ENCODE measurements at regions of chr20 and their contacts with region 1.

Region 1: DNA sequence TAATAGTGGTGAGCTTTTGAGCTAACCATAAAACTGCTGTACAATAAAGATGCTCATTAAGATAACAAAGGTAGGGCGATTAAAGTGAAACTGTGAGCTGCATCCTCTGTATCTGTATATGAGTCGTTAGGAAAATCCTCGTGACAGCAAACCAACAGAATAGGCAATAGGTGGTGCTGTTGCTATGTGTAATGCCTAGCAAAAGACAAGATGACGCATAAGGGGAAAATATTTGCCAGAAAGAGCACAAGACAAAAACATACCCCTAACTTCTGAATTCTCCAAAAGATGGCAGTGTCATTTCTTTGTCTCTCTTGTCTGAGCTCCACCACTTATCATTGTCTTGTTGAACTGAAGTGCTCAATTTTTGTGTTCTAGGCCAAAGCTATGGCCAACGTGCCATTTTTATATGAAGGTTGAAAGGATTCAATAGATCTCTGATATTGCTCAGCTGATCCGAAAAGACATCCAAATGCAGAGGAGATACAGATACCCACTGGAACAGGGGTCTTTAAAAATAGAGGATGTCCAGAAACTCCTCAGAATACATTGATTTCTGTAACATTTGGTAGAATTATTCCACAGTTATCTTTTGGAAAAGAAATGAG is 56.3 kb upstream of the ANKEF1 start:
- DNase-seq: peak; percentile 63 to 94
- ATAC-seq: peak; percentile 94 to 95
- H3K4me3 ChIP-seq: no peak overlapping the region; the same call in 2 of the 3 replicates
- H3K27ac ChIP-seq: peak overlapping the region; percentile 33 to 74
- H3K4me1 ChIP-seq: peaks cover 21% of the 10 kb centered on the region; the same call in 2 of the 3 replicates
- CTCF ChIP-seq: peak; percentile 100
- EP300 ChIP-seq: peak in 1 of 2 experiments; percentile 31; a peak in 1 of 5 replicates
- POLR2A ChIP-seq: no peak
- RAD21 ChIP-seq: peak; percentile 100

Region 2: DNA sequence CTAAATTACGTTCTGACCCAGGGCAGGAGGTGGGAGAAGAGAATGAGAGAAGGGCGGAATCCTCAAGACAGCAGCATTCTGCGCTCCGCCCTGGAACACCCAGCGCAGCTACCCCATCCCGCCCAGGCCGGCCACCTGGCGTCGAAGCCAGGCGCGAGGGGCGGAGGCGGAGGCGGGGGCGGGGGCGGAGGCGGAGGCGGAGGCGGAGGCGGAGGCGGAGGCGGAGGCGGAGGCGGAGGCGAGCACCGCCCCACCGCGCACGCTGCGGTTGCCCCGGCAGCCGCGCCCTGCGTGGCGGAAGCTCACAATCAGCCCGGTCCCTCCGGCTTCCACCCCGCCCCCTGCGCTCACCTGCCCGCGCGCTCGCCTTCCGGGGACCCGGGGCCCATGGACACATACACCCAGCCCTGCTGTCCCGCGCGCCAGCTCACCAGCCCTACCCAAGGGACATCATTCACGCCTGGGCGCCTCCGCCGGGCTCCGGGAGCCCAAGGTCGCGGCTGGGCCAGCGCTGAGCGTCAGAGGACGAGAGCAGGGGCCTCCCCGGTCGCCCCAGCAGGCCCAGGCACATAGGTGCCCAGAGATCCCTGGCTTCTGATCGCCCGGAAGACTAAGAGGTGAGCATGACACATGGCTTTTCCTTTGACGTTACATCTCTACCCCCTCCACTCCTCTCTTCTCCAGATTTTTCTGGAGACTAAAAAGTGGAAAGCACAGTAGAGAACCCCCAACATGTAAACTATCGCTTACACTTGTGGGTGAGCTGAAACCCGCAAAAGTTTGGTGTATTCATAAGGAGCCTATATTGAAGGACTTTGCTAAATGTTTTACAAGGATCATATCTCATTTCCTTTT is 56.4 kb after region 1 on chr20 and contains the start of gene ANKEF1:
- CTCF ChIA-PET with region 1: interaction called, 24 read pairs
- POLR2A ChIA-PET with region 1: no interaction called
- DNase-seq: peak; percentile 88 to 91
- ATAC-seq: peak; percentile 99 to 100
- H3K4me3 ChIP-seq: peak within 1 kb of the TSS; percentile 61
- H3K27ac ChIP-seq: peak within 1 kb of the TSS; percentile 85 to 93
- H3K4me1 ChIP-seq: peaks cover 23% of the 10 kb centered on the region
- CTCF ChIP-seq: no peak
- EP300 ChIP-seq: no peak
- POLR2A ChIP-seq: peak; percentile 69
- RAD21 ChIP-seq: peak in 1 of 2 experiments; percentile 38; a peak in 2 of 5 replicates
- polyA plus RNA-seq, gene ANKEF1: 19.7 and 21.2 TPM in 2 replicates

Region 3: DNA sequence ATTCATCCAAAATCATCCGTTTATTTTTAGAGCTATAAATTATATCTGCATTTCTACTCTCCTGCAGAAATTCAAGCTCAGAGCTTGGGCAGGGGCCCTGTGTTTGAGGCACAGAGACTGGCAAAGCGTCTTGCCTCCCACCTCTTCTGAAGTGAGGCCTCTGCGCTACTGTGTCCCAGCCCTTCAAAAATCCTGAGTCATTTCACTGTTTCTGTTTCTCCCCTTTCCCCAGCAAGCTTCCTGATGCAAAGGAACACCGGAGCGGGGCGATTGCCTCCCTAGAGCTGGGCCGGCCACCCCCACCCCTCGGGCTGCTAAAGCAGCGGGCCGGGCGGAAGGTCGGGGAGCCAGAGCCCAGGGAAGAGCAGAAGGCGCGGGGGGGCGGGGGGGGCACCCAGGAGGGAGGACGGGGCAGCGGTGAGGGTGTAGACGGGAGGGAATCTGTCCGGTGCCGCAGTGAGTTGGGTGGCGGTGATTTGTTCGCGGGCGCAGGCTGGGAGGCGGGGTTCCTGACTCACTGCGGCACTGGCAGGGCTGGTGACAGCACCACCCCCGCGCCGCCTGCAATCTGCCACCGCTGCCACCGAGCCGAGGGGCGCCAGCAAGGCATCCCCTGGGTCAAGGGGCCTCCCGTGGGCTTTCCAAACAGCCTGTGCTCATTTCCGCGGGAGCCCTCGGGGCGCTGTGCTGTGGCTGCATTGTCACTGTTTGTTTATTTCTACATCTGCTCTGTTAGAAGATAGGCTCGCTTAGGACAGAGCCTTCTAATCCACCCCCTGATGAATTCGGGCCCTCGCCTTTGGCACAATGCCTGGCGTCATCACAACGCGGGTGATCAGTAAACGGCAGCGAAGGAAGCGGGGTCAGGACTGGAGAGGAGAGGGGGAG is 193.6 kb after region 1 on chr20:
- CTCF ChIA-PET with region 1: interaction called, 24 read pairs
- POLR2A ChIA-PET with region 1: no interaction called
- DNase-seq: peak; percentile 84 to 89
- ATAC-seq: peak; percentile 98
- H3K4me3 ChIP-seq: peak overlapping the region; percentile 50
- H3K27ac ChIP-seq: peak overlapping the region; percentile 88 to 91
- H3K4me1 ChIP-seq: peaks cover 19% of the 10 kb centered on the region
- CTCF ChIP-seq: peak; percentile 20; the same call in 1 of the 3 replicates
- EP300 ChIP-seq: peak; percentile 52 to 68; a peak in 3 of 5 replicates
- POLR2A ChIP-seq: no peak
- RAD21 ChIP-seq: peak; percentile 3 to 57; a peak in 2 of 5 replicates

Region 4: GRCh38 chr20:10255846-10256245 is 277.3 kb after region 1 on chr20:
- CTCF ChIA-PET with region 1: interaction called, 17 read pairs
- POLR2A ChIA-PET with region 1: no interaction called
- DNase-seq: no peak
- ATAC-seq: no peak
- H3K4me3 ChIP-seq: no peak overlapping the region
- H3K27ac ChIP-seq: peak overlapping the region in 1 of 2 experiments; percentile 61; a peak in 4 of 6 replicates
- H3K4me1 ChIP-seq: peaks cover 48% of the 10 kb centered on the region
- CTCF ChIP-seq: no peak
- EP300 ChIP-seq: no peak
- POLR2A ChIP-seq: no peak
- RAD21 ChIP-seq: no peak

Region 5: GRCh38 chr20:10434832-10435812 is 456.6 kb after region 1 on chr20 and contains the start of gene SLX4IP:
- CTCF ChIA-PET with region 1: interaction called, 123 read pairs
- POLR2A ChIA-PET with region 1: interaction called, 21 read pairs
- DNase-seq: peak; percentile 90 to 99
- ATAC-seq: peak; percentile 75 to 83
- H3K4me3 ChIP-seq: peak within 1 kb of the TSS; percentile 75
- H3K27ac ChIP-seq: peak within 1 kb of the TSS; percentile 90 to 96
- H3K4me1 ChIP-seq: peaks cover 48% of the 10 kb centered on the region
- CTCF ChIP-seq: no peak
- EP300 ChIP-seq: no peak
- POLR2A ChIP-seq: peak; percentile 73
- RAD21 ChIP-seq: peak in 1 of 2 experiments; percentile 27; a peak in 1 of 5 replicates
- polyA plus RNA-seq, gene SLX4IP: 7.5 and 8.0 TPM in 2 replicates

Region 6: DNA sequence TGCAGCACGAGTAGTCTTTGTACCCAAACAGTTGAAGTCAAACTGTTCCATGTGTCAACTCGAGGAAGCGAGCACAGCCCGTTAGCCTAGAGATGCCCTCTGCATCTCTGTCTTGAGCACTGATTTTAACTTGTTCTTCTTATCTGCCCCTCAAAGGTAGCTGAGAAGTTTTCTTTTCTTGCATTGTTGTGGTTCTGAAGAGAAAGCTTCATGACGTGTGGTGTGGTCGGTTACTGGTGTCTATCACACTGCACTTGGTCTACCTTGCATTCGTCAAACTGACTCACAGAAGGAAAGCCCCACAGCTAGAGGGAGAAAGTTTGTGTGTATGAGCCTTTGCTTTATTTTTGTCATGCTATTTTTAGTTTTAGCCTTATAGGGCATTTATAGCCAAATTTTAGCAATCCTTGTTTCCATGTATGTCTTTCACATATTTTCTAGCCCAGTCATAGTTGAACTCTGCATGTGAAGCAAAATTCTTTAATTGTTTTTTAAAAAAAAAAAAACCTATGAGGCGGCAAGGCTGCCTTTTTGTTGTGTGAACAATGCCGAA is 580.2 kb after region 1 on chr20:
- CTCF ChIA-PET with region 1: interaction called, 14 read pairs
- POLR2A ChIA-PET with region 1: no interaction called
- DNase-seq: peak in 1 of 2 experiments; percentile 44
- ATAC-seq: peak in 1 of 2 experiments; percentile 69; a peak in 3 of 6 replicates
- H3K4me3 ChIP-seq: no peak overlapping the region
- H3K27ac ChIP-seq: peak overlapping the region; percentile 3 to 21; a peak in 3 of 6 replicates
- H3K4me1 ChIP-seq: peaks cover 48% of the 10 kb centered on the region
- CTCF ChIP-seq: no peak; the same call in 2 of the 3 replicates
- EP300 ChIP-seq: no peak
- POLR2A ChIP-seq: no peak
- RAD21 ChIP-seq: no peak

Measured in A549 (cell line).